ENCODE measurements at regions of chr4 and their contacts with region 1.

Region 1: GRCh38 chr4:45160951-45161350 is 434.6 kb upstream of the GNPDA2 start:
- DNase-seq: no peak
- ATAC-seq: no peak

Region 2: DNA sequence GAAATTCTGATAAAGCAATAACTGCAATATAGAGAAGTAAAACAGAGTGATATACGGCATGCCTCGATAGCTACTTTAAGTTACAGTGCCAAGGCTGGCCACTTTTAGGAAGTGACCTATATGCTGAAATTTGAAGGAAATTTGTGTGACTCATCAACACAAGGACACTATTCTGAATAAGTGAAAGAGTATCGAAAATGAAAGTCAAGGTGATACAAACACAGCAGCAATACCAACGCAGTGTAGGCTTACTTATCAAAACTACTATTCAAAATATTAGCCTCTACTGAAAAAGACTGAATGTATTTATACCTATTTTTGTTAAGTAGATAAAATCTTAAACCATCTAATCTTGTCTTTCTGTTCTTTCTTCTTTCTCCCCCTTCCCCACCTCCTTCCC is 25.3 kb after region 1 on chr4:
- intact Hi-C with region 1: loop called (anchors 1 kb)
- DNase-seq: no peak
- ATAC-seq: no peak